Endothelial cell of umbilical vein (primary cell): ENCODE measurements at regions of chr2 and their contacts with region 1.

Region 1: DNA sequence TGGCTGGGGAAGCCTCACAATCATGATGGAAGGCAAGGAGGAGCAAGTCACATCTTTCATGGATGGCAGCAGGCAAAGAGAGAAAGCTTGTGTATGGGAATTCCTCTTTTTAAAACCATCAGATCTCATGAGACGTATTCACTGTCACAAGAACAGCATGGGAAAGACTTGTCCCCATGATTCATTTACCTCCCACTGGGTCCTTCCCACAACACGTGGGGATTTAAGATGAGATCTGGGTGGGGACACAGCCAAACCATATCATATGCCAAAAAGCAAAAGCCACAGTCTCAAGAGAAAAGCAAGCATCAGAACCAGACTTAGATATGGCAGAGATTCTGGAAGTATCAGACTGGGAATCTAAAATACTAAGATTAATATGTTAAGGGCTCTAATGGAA is 30.0 kb upstream of the SCRN3 start:
- DNase-seq: no peak
- H3K4me3 ChIP-seq: no peak overlapping the region
- H3K27ac ChIP-seq: no peak overlapping the region
- H3K4me1 ChIP-seq: no peaks in the 10 kb centered on the region
- H3K27me3 ChIP-seq: no peaks in the 10 kb centered on the region
- CTCF ChIP-seq: no peak
- POLR2A ChIP-seq: no peak

Region 2: GRCh38 chr2:173749315-173749714 is 616.3 kb before region 1 on chr2:
- CTCF ChIA-PET with region 1: no interaction called
- POLR2A ChIA-PET with region 1: no interaction called
- dilution Hi-C with region 1: no loop called
- intact Hi-C with region 1: no loop called
- DNase-seq: peak; percentile 8
- H3K4me3 ChIP-seq: no peak overlapping the region
- H3K27ac ChIP-seq: no peak overlapping the region
- H3K4me1 ChIP-seq: no peaks in the 10 kb centered on the region
- H3K27me3 ChIP-seq: peaks cover 4 to 10% of the 10 kb centered on the region in 2 experiments
- CTCF ChIP-seq: no peak
- POLR2A ChIP-seq: no peak

Region 3: DNA sequence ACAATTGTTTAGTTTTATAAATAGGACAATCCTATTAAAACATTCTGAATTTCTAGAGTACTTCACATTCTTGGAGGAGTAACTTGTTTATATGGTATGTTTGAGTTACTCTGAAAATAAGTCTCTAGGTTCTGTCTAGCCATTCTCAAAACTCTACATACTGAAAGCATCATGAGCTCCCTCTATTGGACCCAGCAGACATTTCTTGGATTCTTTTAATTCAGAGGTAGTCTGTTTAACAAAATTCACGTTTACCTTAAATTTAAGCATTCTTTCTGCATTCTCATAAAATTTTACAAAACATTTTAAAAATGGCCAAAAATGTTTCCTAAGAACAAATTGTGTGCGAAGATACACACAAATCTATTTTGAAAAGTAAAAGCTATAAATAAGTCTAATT is 15.6 kb before region 1 on chr2:
- CTCF ChIA-PET with region 1: interaction called, 6 read pairs
- POLR2A ChIA-PET with region 1: interaction called, 10 read pairs
- dilution Hi-C with region 1: no loop called
- intact Hi-C with region 1: no loop called
- DNase-seq: no peak
- H3K4me3 ChIP-seq: no peak overlapping the region
- H3K27ac ChIP-seq: no peak overlapping the region
- H3K4me1 ChIP-seq: no peaks in the 10 kb centered on the region
- H3K27me3 ChIP-seq: no peaks in the 10 kb centered on the region
- CTCF ChIP-seq: peak; percentile 11 to 35
- POLR2A ChIP-seq: no peak